Transverse colon (tissue), 4 donors: ENCODE measurements at regions of chr12 and their contacts with region 1.

Region 1: DNA sequence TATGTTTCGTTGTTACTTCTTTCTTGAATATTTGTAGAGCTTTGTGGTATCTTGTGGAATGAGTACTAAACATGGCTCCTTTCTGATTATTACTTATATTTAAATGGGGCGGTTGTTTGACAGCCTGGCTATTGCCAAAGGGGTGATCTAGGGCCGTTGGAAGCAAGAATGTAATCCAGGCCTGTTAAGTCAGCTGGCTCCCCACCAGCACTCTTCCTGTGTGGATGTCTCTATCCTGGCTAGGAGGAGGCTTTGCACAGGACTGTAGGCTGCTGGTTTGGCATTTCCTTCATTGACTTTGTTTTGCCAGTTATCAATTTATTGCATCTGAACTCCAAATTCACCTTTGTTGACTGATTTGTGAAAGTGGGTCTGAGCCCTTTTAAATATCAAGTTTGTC is 5.6 kb downstream of the FAM234B start:
- DNase-seq: no peak
- H3K4me3 ChIP-seq: no peak overlapping the region
- H3K27ac ChIP-seq: no peak overlapping the region
- H3K4me1 ChIP-seq: peaks cover 0 to 14% (median 3%) of the 10 kb centered on the region in 4 donors
- H3K27me3 ChIP-seq: peaks cover 70% of the 10 kb centered on the region
- CTCF ChIP-seq: no peak
- EP300 ChIP-seq: no peak
- POLR2A ChIP-seq: no peak

Region 2: GRCh38 chr12:11991604-11992003 is 1058.2 kb before region 1 on chr12:
- in situ Hi-C with region 1: no loop called
- intact Hi-C with region 1: no loop called
- DNase-seq: no peak
- H3K4me3 ChIP-seq: no peak overlapping the region
- H3K27ac ChIP-seq: no peak overlapping the region
- H3K4me1 ChIP-seq: no peaks in the 10 kb centered on the region
- H3K27me3 ChIP-seq: no peaks in the 10 kb centered on the region
- CTCF ChIP-seq: no peak
- EP300 ChIP-seq: no peak
- POLR2A ChIP-seq: no peak

Region 3: GRCh38 chr12:12449467-12450025 is 600.3 kb before region 1 on chr12:
- in situ Hi-C with region 1: no loop called
- intact Hi-C with region 1: no loop called
- DNase-seq: no peak
- H3K4me3 ChIP-seq: no peak overlapping the region
- H3K27ac ChIP-seq: no peak overlapping the region
- H3K4me1 ChIP-seq: peaks cover 0 to 31% (median 14%) of the 10 kb centered on the region in 4 donors
- H3K27me3 ChIP-seq: no peaks in the 10 kb centered on the region
- CTCF ChIP-seq: no peak
- EP300 ChIP-seq: no peak
- POLR2A ChIP-seq: no peak

Region 4: DNA sequence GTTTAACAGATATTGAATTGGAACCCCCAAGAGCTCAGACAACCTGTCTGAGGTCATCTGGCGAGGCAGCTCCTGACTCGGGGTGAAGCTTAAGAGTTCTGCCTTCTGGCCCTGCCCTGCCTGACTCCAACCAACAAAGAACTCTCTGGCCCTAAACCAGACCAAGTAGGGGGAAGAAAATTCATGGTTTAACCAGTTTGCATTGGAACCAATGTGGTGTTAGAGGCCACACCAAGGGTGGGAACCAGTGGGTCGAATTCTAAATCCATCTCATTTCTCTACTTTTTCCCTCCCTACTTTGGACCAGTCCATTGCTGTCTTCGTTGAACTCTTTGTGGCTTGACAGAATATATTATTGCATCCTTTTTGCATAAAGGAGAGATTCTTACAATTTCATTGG is 84.1 kb after region 1 on chr12:
- in situ Hi-C with region 1: no loop called
- intact Hi-C with region 1: loop called (anchors 2 kb)
- DNase-seq: no peak
- H3K4me3 ChIP-seq: no peak overlapping the region
- H3K27ac ChIP-seq: no peak overlapping the region
- H3K4me1 ChIP-seq: no peaks in the 10 kb centered on the region
- H3K27me3 ChIP-seq: peaks cover 4% of the 10 kb centered on the region
- CTCF ChIP-seq: no peak
- EP300 ChIP-seq: no peak
- POLR2A ChIP-seq: no peak